Natural killer cell (primary cell): ENCODE measurements at regions of chr1 and their contacts with region 1.

Region 1: DNA sequence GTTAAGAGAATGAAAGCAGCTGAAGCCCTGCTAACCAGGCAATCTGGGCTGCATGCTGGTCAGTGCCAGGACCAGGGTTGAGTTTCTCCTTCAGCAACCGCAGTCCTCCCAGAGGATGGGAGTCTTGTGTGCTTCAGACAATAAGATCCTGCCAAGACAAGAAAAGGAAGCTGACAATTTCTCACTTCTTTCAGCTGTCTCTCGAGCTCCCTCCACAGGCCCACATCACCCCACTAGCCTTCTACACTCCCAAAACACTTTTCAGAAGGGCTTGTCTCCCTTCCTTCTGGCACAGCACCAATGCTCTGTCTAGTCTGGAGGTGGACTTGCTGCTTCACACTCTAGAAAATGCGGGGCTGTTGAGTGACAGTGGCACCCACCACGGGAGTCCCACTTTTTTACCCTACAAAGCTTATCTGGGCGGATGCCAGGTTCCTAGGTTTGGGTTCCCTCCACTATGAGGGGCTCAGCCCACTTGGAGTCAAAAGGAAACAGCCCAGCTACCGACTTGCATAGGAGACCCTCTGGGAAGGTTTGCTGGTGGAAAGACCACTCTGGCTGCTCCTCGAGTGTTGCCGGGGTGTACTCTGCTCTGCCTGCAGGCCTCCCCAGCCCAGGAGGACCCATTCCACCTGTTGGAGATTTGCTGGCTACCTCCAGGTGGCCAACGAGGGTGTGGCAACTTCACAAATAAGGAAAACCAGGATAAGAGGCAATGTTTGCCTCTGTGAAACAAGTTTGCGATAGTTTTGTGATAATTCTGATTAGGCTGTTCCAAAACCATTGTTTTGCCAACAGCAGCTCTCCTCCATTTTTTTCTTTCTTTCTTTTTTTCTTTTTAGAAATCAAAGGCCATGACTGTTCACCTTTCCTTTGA is 68.9 kb downstream of the TENT5C start:
- DNase-seq: peak in 1 of 2 donors; percentile 82
- ATAC-seq: peak; percentile 77 to 94 (median 91)
- H3K4me3 ChIP-seq: no peak overlapping the region
- H3K4me3 Mint-ChIP-seq: no peak overlapping the region
- H3K27ac ChIP-seq: no peak overlapping the region
- H3K27ac Mint-ChIP-seq: peak overlapping the region in 1 of 2 donors; percentile 63
- H3K4me1 ChIP-seq: peaks cover 20% of the 10 kb centered on the region
- H3K4me1 Mint-ChIP-seq: peaks cover 8 to 13% of the 10 kb centered on the region in 2 donors
- H3K27me3 ChIP-seq: no peaks in the 10 kb centered on the region
- H3K27me3 Mint-ChIP-seq: peaks cover 0 to 9% of the 10 kb centered on the region in 2 donors
- CTCF ChIP-seq: peak; percentile 73

Region 2: GRCh38 chr1:117512743-117513321 is 161.9 kb before region 1 on chr1:
- intact Hi-C with region 1: loop called (anchors 1 kb)
- DNase-seq: peak in 1 of 2 donors; percentile 59
- ATAC-seq: peak in 1 of 3 donors; percentile 60
- H3K4me3 ChIP-seq: no peak overlapping the region
- H3K4me3 Mint-ChIP-seq: no peak overlapping the region
- H3K27ac ChIP-seq: no peak overlapping the region
- H3K27ac Mint-ChIP-seq: no peak overlapping the region
- H3K4me1 ChIP-seq: no peaks in the 10 kb centered on the region
- H3K4me1 Mint-ChIP-seq: no peaks in the 10 kb centered on the region
- H3K27me3 ChIP-seq: no peaks in the 10 kb centered on the region
- H3K27me3 Mint-ChIP-seq: no peaks in the 10 kb centered on the region
- CTCF ChIP-seq: peak; percentile 54

Region 3: GRCh38 chr1:117534995-117535467 is 139.7 kb before region 1 on chr1:
- intact Hi-C with region 1: loop called (anchors 1 kb)
- DNase-seq: peak in 1 of 2 donors; percentile 83
- ATAC-seq: peak; percentile 82 to 94 (median 91)
- H3K4me3 ChIP-seq: no peak overlapping the region
- H3K4me3 Mint-ChIP-seq: no peak overlapping the region
- H3K27ac ChIP-seq: no peak overlapping the region
- H3K27ac Mint-ChIP-seq: no peak overlapping the region
- H3K4me1 ChIP-seq: peaks cover 4% of the 10 kb centered on the region
- H3K4me1 Mint-ChIP-seq: peaks cover 0 to 6% of the 10 kb centered on the region in 2 donors
- H3K27me3 ChIP-seq: no peaks in the 10 kb centered on the region
- H3K27me3 Mint-ChIP-seq: peaks cover 0 to 4% of the 10 kb centered on the region in 2 donors
- CTCF ChIP-seq: peak; percentile 61

Region 4: DNA sequence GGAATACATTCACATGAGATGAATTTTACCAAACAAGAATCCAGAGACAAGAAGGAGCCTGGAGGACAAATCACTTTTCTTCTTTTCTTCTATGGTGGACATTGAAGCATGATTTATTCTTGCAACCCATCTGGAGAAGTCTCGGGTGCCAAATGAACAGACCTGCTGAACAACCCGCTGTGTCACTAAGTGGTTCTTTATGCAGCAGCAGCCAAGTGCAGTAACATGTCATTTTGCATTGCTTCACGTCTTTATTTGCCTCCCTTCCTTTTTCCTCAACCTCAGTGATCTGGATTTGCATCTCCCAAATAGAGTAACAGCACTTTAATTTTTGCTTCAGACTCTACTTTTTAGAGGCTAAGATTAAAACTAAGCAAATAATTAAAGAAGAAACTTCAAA is 119.0 kb before region 1 on chr1:
- intact Hi-C with region 1: loop called (anchors 5 kb)
- DNase-seq: no peak
- ATAC-seq: no peak
- H3K4me3 ChIP-seq: no peak overlapping the region
- H3K4me3 Mint-ChIP-seq: no peak overlapping the region
- H3K27ac ChIP-seq: no peak overlapping the region
- H3K27ac Mint-ChIP-seq: no peak overlapping the region
- H3K4me1 ChIP-seq: peaks cover 7% of the 10 kb centered on the region
- H3K4me1 Mint-ChIP-seq: peaks cover 21 to 26% of the 10 kb centered on the region in 2 donors
- H3K27me3 ChIP-seq: no peaks in the 10 kb centered on the region
- H3K27me3 Mint-ChIP-seq: peaks cover 5 to 17% of the 10 kb centered on the region in 2 donors
- CTCF ChIP-seq: no peak

Region 5: DNA sequence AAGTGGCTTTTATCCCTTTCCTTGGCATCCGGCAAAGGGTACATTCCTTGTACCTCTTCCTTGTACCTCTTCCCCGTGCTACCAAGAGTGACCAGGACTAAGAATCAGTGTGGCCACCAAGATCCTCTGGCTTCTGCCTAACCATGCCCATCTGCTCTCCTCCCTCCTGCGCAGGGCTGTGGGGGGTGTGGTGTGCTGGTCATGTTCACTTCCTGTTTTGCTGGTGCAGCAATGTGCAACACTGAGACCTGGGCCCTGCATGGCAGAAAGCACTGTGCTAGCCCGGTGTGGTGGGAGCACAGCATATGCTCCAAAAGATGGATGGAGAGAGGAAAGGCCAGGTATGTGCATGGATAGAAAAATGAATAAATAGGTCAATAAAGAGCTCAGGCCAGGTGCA is 102.2 kb before region 1 on chr1:
- intact Hi-C with region 1: no loop called
- DNase-seq: peak in 1 of 2 donors; percentile 50
- ATAC-seq: peak; percentile 68 to 93 (median 90)
- H3K4me3 ChIP-seq: no peak overlapping the region
- H3K4me3 Mint-ChIP-seq: no peak overlapping the region
- H3K27ac ChIP-seq: no peak overlapping the region
- H3K27ac Mint-ChIP-seq: peak overlapping the region in 1 of 2 donors; percentile 47
- H3K4me1 ChIP-seq: peaks cover 15% of the 10 kb centered on the region
- H3K4me1 Mint-ChIP-seq: peaks cover 15 to 18% of the 10 kb centered on the region in 2 donors
- H3K27me3 ChIP-seq: no peaks in the 10 kb centered on the region
- H3K27me3 Mint-ChIP-seq: peaks cover 0 to 6% of the 10 kb centered on the region in 2 donors
- CTCF ChIP-seq: no peak

Region 6: DNA sequence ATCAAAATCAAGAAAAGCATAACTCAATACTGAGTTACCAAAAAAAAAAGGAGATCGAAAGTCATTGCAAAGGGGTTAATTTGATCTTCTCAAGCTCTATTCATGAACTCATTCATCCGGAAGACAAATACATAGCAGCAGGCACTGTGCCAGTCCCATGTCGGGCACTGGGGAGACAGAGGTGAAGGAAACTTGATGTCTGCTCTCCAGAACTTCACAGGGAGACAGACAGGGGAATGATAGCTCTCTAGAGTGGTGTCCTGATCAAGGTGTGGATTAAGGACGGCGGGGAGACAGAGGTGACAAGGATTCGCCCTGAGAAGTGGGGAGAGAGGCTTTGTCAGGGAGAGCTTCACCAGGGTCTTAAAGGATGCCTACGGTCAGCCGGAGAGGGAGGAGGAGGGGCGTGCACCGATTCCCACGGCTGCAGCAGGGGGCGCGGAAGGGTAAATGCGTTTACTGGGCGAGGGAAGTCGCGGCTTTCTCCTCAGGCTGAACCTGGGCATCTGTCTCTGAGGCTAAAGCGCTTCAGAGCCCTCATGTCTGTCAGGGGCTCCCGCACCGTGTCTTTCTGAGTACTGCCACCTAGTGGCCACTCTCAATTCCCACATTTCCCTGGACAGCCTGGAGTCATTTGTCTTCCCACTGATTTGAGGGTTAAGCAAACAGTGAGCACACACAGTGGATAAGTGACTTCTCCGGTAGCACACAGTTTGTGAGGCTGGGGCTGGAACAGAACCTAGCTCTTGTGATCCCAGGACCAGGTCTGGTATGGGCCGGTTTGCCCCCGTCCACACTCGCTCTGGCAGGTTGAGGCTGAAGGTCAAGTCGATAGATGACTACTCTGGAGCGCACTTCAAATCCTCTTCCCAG is 83.9 kb after region 1 on chr1:
- intact Hi-C with region 1: loop called (anchors 5 kb)
- DNase-seq: peak; percentile 51 to 85
- ATAC-seq: peak; percentile 87 to 94 (median 94)
- H3K4me3 ChIP-seq: peak overlapping the region; percentile 25
- H3K4me3 Mint-ChIP-seq: peak overlapping the region; percentile 84
- H3K27ac ChIP-seq: no peak overlapping the region
- H3K27ac Mint-ChIP-seq: peak overlapping the region in 1 of 2 donors; percentile 16
- H3K4me1 ChIP-seq: peaks cover 12% of the 10 kb centered on the region
- H3K4me1 Mint-ChIP-seq: peaks cover 11% of the 10 kb centered on the region in 2 donors
- H3K27me3 ChIP-seq: peaks cover 6% of the 10 kb centered on the region
- H3K27me3 Mint-ChIP-seq: peaks cover 21 to 47% of the 10 kb centered on the region in 2 donors
- CTCF ChIP-seq: peak; percentile 93